ENCODE measurements at regions of chr7 and their contacts with region 1.

Region 1: DNA sequence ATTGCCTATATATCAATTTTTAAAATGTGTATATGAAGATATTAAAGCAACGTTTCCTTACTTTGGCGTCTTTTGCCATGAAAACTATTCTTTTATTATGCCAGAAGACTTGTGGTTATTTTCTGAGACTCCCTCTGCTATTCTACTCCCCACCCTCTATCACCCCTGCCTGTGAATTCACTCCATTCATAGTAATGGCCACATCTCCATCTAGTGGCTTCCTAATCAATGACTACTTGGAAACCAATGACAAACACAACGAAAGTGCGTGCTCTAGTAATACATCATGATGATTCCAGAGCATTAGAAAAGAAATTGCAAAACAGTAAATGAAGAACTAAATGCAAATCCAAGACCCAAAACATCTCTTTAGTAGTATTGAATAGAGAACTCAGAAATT is 186.7 kb upstream of the HGF start:
- DNase-seq: no peak
- H3K4me3 ChIP-seq: no peak overlapping the region
- H3K27ac ChIP-seq: no peak overlapping the region
- H3K4me1 ChIP-seq: no peaks in the 10 kb centered on the region
- H3K27me3 ChIP-seq: no peaks in the 10 kb centered on the region
- CTCF ChIP-seq: peak in 2 of 6 experiments; percentile 21 to 33
- POLR2A ChIP-seq: no peak

Region 2: GRCh38 chr7:81482600-81483186 is 473.8 kb before region 1 on chr7:
- intact Hi-C with region 1: loop called (anchors 10 kb)
- DNase-seq: no peak
- H3K4me3 ChIP-seq: no peak overlapping the region
- H3K27ac ChIP-seq: no peak overlapping the region
- H3K4me1 ChIP-seq: peaks cover 0 to 13% of the 10 kb centered on the region in 2 donors
- H3K27me3 ChIP-seq: no peaks in the 10 kb centered on the region
- CTCF ChIP-seq: peak in 4 of 6 experiments; percentile 41 to 81 (median 66)
- POLR2A ChIP-seq: no peak

Region 3: DNA sequence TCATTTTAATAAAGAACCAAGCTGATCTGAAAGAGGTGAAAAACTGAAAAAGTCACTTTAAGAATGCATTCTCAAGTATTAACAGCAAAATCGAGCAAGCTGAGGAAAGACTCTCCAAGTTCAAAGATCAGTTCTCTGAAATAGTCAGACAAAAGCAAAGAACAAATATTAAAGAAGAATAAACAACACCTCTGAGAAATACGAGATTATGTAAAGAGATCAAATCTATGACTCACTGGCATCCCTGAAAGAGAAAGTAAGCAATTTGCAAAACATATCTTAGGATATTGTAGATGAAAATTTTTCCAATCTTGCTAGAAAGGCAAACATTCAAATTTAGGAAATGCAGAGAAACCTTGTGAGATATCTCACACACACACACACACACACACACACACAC is 48.3 kb before region 1 on chr7:
- intact Hi-C with region 1: no loop called
- DNase-seq: no peak
- H3K4me3 ChIP-seq: no peak overlapping the region
- H3K27ac ChIP-seq: no peak overlapping the region
- H3K4me1 ChIP-seq: no peaks in the 10 kb centered on the region
- H3K27me3 ChIP-seq: no peaks in the 10 kb centered on the region
- CTCF ChIP-seq: no peak
- POLR2A ChIP-seq: no peak

Region 4: DNA sequence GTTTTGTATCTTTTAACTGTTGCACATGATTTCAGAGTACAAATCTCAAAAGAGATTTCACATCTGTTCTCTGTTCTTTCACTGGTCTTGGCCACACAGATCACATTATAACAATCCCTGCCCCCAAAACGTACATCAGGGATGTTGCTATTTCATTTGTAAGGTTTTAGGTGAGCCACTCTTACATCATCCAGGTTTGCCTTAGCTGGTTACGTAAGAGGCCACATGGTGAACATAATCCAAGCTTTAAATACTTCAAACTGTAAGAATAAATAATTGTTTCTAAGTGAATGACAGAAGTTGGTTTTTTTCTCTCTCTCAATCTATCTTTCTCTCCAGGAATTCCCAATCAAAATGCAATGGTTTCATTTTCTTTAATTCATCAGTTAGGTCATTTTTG is 59.2 kb after region 1 on chr7:
- intact Hi-C with region 1: no loop called
- DNase-seq: no peak
- H3K4me3 ChIP-seq: no peak overlapping the region
- H3K27ac ChIP-seq: no peak overlapping the region
- H3K4me1 ChIP-seq: no peaks in the 10 kb centered on the region
- H3K27me3 ChIP-seq: no peaks in the 10 kb centered on the region
- CTCF ChIP-seq: no peak
- POLR2A ChIP-seq: no peak

Measured in thyroid gland (tissue), 4 donors.